ENCODE measurements at regions of chr15 and their contacts with region 1.

Region 1: GRCh38 chr15:71575474-71576045 is 234.8 kb upstream of the NR2E3 start:
- DNase-seq: no peak
- ATAC-seq: peak in 2 of 8 donors; percentile 29 to 36
- H3K4me3 ChIP-seq: no peak overlapping the region
- H3K27ac ChIP-seq: no peak overlapping the region
- H3K4me1 ChIP-seq: peaks cover 0 to 12% (median 0%) of the 10 kb centered on the region in 9 donors
- H3K27me3 ChIP-seq: no peaks in the 10 kb centered on the region
- CTCF ChIP-seq: peak; percentile 21 to 59 (median 48)

Region 2: DNA sequence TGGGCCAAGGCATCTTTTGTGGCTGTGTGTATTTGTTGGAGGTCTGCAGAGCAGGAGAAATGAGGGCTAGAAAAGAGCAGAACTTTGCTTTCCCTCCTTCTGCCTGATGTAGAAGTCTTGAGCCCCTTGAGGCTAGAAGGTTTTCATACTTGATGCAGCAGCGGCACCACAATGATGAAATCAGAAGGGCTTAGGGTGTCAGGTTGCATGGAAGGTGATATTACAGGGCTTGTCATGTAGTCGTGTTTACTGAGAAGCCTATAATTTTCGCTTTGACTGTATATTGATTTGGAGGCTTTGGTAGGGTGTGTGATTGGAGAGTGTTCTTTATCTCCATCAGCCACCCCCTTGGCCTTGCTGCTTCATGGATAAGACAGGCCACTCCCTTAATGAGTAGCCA is 120.5 kb before region 1 on chr15:
- intact Hi-C with region 1: loop called in 1 of 10 experiments (anchors 10 kb)
- DNase-seq: no peak
- ATAC-seq: no peak
- H3K4me3 ChIP-seq: no peak overlapping the region
- H3K27ac ChIP-seq: no peak overlapping the region
- H3K4me1 ChIP-seq: peaks cover 5 to 64% (median 14%) of the 10 kb centered on the region in 9 donors
- H3K27me3 ChIP-seq: no peaks in the 10 kb centered on the region
- CTCF ChIP-seq: no peak

Region 3: GRCh38 chr15:71651750-71652186 is 76.2 kb after region 1 on chr15:
- intact Hi-C with region 1: loop called in 2 of 10 experiments (anchors 5 kb)
- DNase-seq: no peak
- ATAC-seq: peak in 5 of 8 donors; percentile 31 to 43 (median 35)
- H3K4me3 ChIP-seq: no peak overlapping the region
- H3K27ac ChIP-seq: peak overlapping the region in 2 of 10 donors; percentile 15 to 27
- H3K4me1 ChIP-seq: peaks cover 5 to 57% (median 26%) of the 10 kb centered on the region in 9 donors
- H3K27me3 ChIP-seq: no peaks in the 10 kb centered on the region
- CTCF ChIP-seq: peak in 8 of 9 donors; percentile 18 to 59 (median 40)

Region 4: GRCh38 chr15:71730277-71731144 is 155.0 kb after region 1 on chr15:
- intact Hi-C with region 1: loop called in 9 of 10 experiments (anchors 2 to 10 kb)
- DNase-seq: peak in 1 of 2 donors; percentile 64
- ATAC-seq: peak; percentile 76 to 89 (median 84)
- H3K4me3 ChIP-seq: no peak overlapping the region
- H3K27ac ChIP-seq: peak overlapping the region in 5 of 10 donors; percentile 5 to 52 (median 42)
- H3K4me1 ChIP-seq: peaks cover 0 to 39% (median 10%) of the 10 kb centered on the region in 9 donors
- H3K27me3 ChIP-seq: no peaks in the 10 kb centered on the region
- CTCF ChIP-seq: peak; percentile 47 to 89 (median 80)

Region 5: DNA sequence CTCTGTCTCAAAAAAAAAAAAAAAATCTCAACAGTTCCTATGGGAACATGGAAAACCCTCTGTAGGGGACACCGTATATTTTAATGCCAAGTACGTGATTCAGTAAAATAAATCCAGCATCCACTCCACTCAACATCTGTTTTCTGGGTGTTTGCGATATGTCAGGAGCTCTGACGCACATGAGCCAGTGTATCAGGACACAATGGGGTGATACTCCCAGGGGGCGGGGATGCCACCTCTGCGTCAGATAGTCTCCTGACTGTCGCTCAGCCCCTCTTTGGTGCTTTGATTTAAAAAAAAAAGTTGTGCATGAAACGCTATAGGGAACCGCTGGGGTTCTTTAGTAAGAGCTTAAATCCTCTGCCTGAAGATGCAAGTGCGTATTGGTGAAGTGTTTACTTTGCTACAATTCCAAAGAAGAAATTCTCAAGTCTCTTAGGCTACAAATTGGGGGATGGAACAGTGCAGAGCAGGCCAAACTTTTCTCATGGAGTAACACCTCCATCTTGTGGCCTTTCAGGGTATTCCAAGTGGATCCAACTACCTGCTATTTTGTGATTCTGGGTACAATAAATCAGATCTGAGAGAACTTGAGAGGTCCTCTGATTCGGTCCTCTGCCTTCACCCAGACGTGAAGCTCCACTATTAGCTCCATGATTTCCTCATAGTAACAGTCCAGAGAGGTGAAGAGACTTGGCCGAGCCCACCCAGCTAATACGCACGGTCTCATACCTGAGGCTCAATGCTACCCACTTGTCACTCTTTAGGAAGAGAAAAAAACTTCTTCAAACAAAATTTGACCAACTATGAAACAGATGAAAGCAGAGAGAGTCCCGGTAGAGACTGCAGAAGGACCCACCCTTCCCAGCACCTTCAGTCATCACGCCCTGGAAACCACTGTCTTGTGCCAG is 225.5 kb after region 1 on chr15:
- intact Hi-C with region 1: loop called in 1 of 10 experiments (anchors 10 kb)
- DNase-seq: peak in 1 of 2 donors; percentile 40
- ATAC-seq: peak; percentile 65 to 90 (median 80)
- H3K4me3 ChIP-seq: no peak overlapping the region
- H3K27ac ChIP-seq: no peak overlapping the region
- H3K4me1 ChIP-seq: peaks cover 0 to 11% (median 5%) of the 10 kb centered on the region in 9 donors
- H3K27me3 ChIP-seq: peaks cover 0 to 4% (median 0%) of the 10 kb centered on the region in 7 donors
- CTCF ChIP-seq: peak; percentile 74 to 92 (median 85)

Measured in heart right ventricle (tissue), 16 donors.